ENCODE measurements at regions of chr5 and their contacts with region 1.

Region 1: GRCh38 chr5:170791325-170791954 is 7.9 kb downstream of the GABRP start:
- DNase-seq: peak; percentile 84
- ATAC-seq: peak; percentile 90
- H3K4me3 Mint-ChIP-seq: no peak overlapping the region
- H3K27ac Mint-ChIP-seq: no peak overlapping the region; the same call in 1 of the 2 replicates
- H3K4me1 Mint-ChIP-seq: peaks cover 36% of the 10 kb centered on the region
- H3K27me3 Mint-ChIP-seq: peaks cover 6% of the 10 kb centered on the region; the same call in 1 of the 2 replicates
- CTCF ChIP-seq: peak; percentile 32

Region 2: DNA sequence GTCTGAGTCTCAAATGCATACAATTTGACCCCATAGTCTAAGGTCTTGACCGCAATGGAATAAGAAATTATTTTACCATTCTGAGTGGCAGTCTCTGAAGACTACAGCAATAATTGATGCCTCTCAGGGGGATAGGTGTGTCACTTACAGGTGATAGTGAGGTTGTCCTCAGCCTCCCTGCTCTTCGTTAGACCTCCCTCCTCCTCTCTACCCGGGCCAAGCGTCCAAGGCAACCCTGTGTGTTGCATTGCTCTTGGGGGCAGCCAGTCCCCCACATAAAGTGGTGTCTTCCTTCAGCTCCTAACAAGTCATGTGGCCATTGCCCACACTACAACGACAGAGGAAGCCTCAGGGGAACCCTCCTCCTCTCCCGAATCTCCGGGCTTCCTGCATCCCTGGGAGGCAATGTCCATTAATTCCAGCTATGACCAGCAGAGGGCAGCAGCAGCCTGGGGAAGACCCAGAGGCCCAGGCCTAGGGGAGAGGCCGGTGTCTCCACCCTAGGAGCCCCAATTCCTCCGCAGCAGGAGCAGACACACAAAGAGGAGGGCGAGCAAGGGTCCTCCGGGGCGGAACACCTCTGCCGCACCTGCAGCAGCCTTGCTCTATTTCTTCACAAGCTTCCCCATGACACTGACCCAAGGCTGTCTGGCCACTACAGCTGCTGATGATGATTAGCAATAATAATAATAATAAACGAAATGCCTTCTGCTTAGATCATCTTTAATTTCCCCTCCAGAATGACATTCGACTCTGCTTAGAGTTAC is 152.8 kb before region 1 on chr5:
- CTCF ChIA-PET with region 1: interaction called, 55 read pairs
- POLR2A ChIA-PET with region 1: no interaction called
- DNase-seq: peak; percentile 96
- ATAC-seq: peak; percentile 88
- H3K4me3 Mint-ChIP-seq: peak overlapping the region; percentile 2; the same call in 1 of the 2 replicates
- H3K27ac Mint-ChIP-seq: no peak overlapping the region
- H3K4me1 Mint-ChIP-seq: peaks cover 46% of the 10 kb centered on the region
- H3K27me3 Mint-ChIP-seq: peaks cover 5% of the 10 kb centered on the region
- CTCF ChIP-seq: peak; percentile 92

Region 3: GRCh38 chr5:170691657-170692056 is 99.8 kb before region 1 on chr5:
- CTCF ChIA-PET with region 1: interaction called, 76 read pairs
- POLR2A ChIA-PET with region 1: interaction called, 3 read pairs
- DNase-seq: peak; percentile 73
- ATAC-seq: peak; percentile 84
- H3K4me3 Mint-ChIP-seq: no peak overlapping the region
- H3K27ac Mint-ChIP-seq: no peak overlapping the region
- H3K4me1 Mint-ChIP-seq: peaks cover 31% of the 10 kb centered on the region
- H3K27me3 Mint-ChIP-seq: no peaks in the 10 kb centered on the region; the same call in none of the 2 replicates
- CTCF ChIP-seq: 0 out of 2 replicates have a peak, but pooled peaks have one; percentile 17

Region 4: GRCh38 chr5:170722316-170722715 is 69.1 kb before region 1 on chr5:
- CTCF ChIA-PET with region 1: interaction called, 18 read pairs
- POLR2A ChIA-PET with region 1: no interaction called
- DNase-seq: no peak
- ATAC-seq: peak; percentile 93
- H3K4me3 Mint-ChIP-seq: no peak overlapping the region
- H3K27ac Mint-ChIP-seq: no peak overlapping the region
- H3K4me1 Mint-ChIP-seq: peaks cover 5% of the 10 kb centered on the region; the same call in 1 of the 2 replicates
- H3K27me3 Mint-ChIP-seq: peaks cover 3% of the 10 kb centered on the region; the same call in 1 of the 2 replicates
- CTCF ChIP-seq: no peak

Region 5: GRCh38 chr5:170760113-170760512 is 31.3 kb before region 1 on chr5:
- CTCF ChIA-PET with region 1: interaction called, 20 read pairs
- POLR2A ChIA-PET with region 1: no interaction called
- DNase-seq: no peak
- ATAC-seq: no peak
- H3K4me3 Mint-ChIP-seq: no peak overlapping the region
- H3K27ac Mint-ChIP-seq: no peak overlapping the region
- H3K4me1 Mint-ChIP-seq: peaks cover 32% of the 10 kb centered on the region
- H3K27me3 Mint-ChIP-seq: no peaks in the 10 kb centered on the region
- CTCF ChIP-seq: no peak

Region 6: DNA sequence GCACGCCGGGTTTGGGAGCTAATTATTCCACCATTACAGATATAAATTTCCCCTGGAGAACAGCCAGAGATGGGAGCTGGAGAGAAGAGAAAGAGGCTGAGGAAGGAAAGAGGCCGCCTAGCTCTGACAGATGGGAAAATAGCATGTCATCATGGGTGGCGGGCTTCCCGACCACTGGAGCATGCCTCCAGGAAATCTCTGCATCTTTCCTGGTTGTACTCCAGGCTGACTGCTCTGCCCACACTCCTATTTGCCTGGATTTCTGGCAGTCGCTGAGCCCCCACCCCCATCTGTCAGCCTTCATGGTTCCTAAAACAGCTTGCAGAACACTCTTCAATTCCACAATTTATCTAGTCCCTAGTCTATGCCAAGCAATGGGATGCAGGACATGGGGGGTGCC is 22.2 kb before region 1 on chr5:
- CTCF ChIA-PET with region 1: interaction called, 34 read pairs
- POLR2A ChIA-PET with region 1: interaction called, 3 read pairs
- DNase-seq: no peak
- ATAC-seq: no peak
- H3K4me3 Mint-ChIP-seq: no peak overlapping the region
- H3K27ac Mint-ChIP-seq: no peak overlapping the region; the same call in 1 of the 2 replicates
- H3K4me1 Mint-ChIP-seq: peaks cover 52% of the 10 kb centered on the region
- H3K27me3 Mint-ChIP-seq: peaks cover 3% of the 10 kb centered on the region; the same call in 1 of the 2 replicates
- CTCF ChIP-seq: no peak

Measured in WTC11 (cell line).